ENCODE measurements at regions of chr14 and their contacts with region 1.

Region 1: DNA sequence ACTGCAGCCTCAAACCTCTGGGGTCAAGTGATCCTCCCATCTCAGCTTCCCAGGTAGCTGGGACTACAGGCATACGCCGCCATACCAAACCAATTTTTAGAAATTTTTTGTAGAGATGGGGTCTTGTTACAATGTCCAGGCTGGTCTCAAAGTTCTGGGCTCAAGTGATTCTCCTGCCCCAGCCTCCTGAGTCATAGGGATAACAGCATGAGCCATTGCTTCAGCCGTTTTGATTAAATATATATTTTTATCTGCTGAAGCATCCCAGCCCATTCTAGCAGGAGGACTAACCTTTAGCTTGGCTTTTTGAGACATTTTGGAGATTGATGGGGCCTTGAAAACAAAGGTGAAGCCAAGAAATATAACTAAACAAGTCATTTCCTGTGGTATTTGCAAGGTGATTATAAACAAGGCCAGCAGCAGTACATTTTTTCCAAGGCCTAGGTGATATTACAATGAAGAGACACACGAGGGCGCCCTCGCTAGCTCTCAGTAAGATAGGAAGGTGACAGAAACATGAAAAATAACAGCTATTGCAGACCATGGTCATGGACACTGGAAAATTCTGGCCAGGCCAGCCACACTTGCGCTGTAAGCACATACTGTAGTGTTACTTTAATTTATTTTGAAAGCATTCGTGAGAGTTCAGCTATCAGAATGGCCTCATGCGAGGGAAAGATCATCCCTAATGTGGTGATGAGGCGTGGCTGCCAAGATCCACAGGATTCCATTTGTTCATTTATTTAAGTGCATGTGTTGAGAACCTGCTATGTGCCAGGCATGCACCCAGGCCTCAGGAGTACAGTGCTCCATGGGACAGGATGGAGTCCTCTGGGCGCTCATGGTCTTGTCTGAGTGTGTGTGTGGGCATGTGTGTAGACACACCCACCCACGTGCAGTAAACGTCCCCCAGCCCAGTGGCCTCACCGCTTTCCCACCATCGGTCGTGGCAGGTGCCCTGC is 63.5 kb downstream of the DGLUCY start:
- DNase-seq: peak; percentile 77
- ATAC-seq: peak; percentile 83
- H3K4me3 ChIP-seq: no peak overlapping the region
- H3K4me3 Mint-ChIP-seq: no peak overlapping the region
- H3K27ac ChIP-seq: peak overlapping the region in 1 of 2 donors; percentile 12
- H3K27ac Mint-ChIP-seq: no peak overlapping the region
- H3K4me1 ChIP-seq: peaks cover 0 to 12% of the 10 kb centered on the region in 2 donors
- H3K4me1 Mint-ChIP-seq: peaks cover 7% of the 10 kb centered on the region
- H3K27me3 ChIP-seq: no peaks in the 10 kb centered on the region
- H3K27me3 Mint-ChIP-seq: no peaks in the 10 kb centered on the region
- CTCF ChIP-seq: peak; percentile 95

Region 2: GRCh38 chr14:90903101-90903500 is 274.3 kb before region 1 on chr14:
- CTCF ChIA-PET with region 1: interaction called, 347 read pairs
- POLR2A ChIA-PET with region 1: interaction called, 3 read pairs
- intact Hi-C with region 1: loop called (anchors 1 kb)
- DNase-seq: peak; percentile 68
- ATAC-seq: peak; percentile 69
- H3K4me3 ChIP-seq: no peak overlapping the region
- H3K4me3 Mint-ChIP-seq: no peak overlapping the region
- H3K27ac ChIP-seq: no peak overlapping the region
- H3K27ac Mint-ChIP-seq: peak overlapping the region; percentile 46
- H3K4me1 ChIP-seq: peaks cover 5 to 8% of the 10 kb centered on the region in 2 donors
- H3K4me1 Mint-ChIP-seq: peaks cover 15% of the 10 kb centered on the region
- H3K27me3 ChIP-seq: no peaks in the 10 kb centered on the region
- H3K27me3 Mint-ChIP-seq: no peaks in the 10 kb centered on the region
- CTCF ChIP-seq: peak; percentile 87

Region 3: DNA sequence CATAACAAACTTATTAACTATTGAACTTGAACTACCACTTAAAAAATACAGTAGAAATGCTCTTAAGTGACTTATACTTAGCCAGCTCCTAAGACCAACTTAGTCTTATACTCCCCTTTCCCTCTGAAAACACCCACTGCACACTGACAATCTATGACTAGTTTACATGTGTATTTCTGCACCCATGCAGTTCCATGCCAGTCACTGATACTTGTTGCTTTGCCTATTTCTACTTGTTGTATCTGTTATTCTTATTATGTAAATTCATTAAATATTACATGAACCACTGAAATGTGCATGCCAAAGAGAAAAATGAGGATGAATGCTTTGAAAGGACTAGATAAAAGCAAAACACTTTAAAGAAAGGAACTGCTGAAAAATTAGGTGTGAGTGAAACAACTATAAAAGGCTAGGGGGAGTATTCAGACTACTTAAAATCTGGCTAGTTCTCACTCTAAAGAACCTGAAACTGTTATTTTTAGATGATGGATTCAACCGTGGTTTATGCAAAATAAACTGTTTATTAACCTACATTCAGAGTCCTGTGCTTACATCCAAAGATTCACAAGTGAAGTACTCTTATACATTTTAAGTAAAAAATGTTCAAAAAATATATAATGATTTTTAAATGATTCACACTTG is 191.6 kb before region 1 on chr14:
- CTCF ChIA-PET with region 1: interaction called, 158 read pairs
- POLR2A ChIA-PET with region 1: no interaction called
- intact Hi-C with region 1: loop called (anchors 1 kb)
- DNase-seq: peak; percentile 45
- ATAC-seq: peak; percentile 31
- H3K4me3 ChIP-seq: no peak overlapping the region
- H3K4me3 Mint-ChIP-seq: no peak overlapping the region
- H3K27ac ChIP-seq: no peak overlapping the region
- H3K27ac Mint-ChIP-seq: no peak overlapping the region
- H3K4me1 ChIP-seq: peaks cover 13% of the 10 kb centered on the region in 2 donors
- H3K4me1 Mint-ChIP-seq: peaks cover 17% of the 10 kb centered on the region
- H3K27me3 ChIP-seq: no peaks in the 10 kb centered on the region
- H3K27me3 Mint-ChIP-seq: no peaks in the 10 kb centered on the region
- CTCF ChIP-seq: peak; percentile 4

Region 4: GRCh38 chr14:91114079-91115065 is 63.0 kb before region 1 on chr14:
- CTCF ChIA-PET with region 1: interaction called, 23 read pairs
- POLR2A ChIA-PET with region 1: no interaction called
- intact Hi-C with region 1: no loop called
- DNase-seq: peak; percentile 85
- ATAC-seq: peak; percentile 80
- H3K4me3 ChIP-seq: peak overlapping the region; percentile 71 to 94 (median 82)
- H3K4me3 Mint-ChIP-seq: peak overlapping the region; percentile 93
- H3K27ac ChIP-seq: peak overlapping the region; percentile 89 to 95
- H3K27ac Mint-ChIP-seq: peak overlapping the region; percentile 98
- H3K4me1 ChIP-seq: peaks cover 35 to 50% of the 10 kb centered on the region in 2 donors
- H3K4me1 Mint-ChIP-seq: peaks cover 68% of the 10 kb centered on the region
- H3K27me3 ChIP-seq: no peaks in the 10 kb centered on the region
- H3K27me3 Mint-ChIP-seq: no peaks in the 10 kb centered on the region
- CTCF ChIP-seq: no peak

Region 5: DNA sequence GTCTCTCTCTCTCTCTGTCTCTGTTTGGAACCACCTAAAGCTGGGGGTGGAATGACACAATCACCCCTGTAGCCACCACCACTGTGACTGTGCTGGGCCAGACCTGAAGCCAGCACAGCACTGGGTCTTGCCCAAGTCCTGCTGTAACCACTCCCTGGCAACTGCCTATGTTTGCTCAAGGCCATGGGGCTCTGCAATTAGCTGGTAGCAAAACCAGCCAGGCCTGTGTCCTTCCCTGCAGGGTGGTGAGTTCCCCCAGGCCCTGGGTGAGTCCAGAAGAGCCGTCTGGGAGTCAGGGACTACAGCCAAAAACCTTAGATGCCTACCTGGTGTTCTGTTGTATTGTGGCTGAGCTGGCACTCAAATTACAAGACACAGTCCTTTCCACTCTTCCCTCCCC is 12.7 kb before region 1 on chr14:
- CTCF ChIA-PET with region 1: interaction called, 11 read pairs
- POLR2A ChIA-PET with region 1: no interaction called
- intact Hi-C with region 1: no loop called
- DNase-seq: no peak
- ATAC-seq: no peak
- H3K4me3 ChIP-seq: no peak overlapping the region
- H3K4me3 Mint-ChIP-seq: no peak overlapping the region
- H3K27ac ChIP-seq: no peak overlapping the region
- H3K27ac Mint-ChIP-seq: no peak overlapping the region
- H3K4me1 ChIP-seq: no peaks in the 10 kb centered on the region
- H3K4me1 Mint-ChIP-seq: no peaks in the 10 kb centered on the region
- H3K27me3 ChIP-seq: no peaks in the 10 kb centered on the region
- H3K27me3 Mint-ChIP-seq: no peaks in the 10 kb centered on the region
- CTCF ChIP-seq: no peak

Region 6: DNA sequence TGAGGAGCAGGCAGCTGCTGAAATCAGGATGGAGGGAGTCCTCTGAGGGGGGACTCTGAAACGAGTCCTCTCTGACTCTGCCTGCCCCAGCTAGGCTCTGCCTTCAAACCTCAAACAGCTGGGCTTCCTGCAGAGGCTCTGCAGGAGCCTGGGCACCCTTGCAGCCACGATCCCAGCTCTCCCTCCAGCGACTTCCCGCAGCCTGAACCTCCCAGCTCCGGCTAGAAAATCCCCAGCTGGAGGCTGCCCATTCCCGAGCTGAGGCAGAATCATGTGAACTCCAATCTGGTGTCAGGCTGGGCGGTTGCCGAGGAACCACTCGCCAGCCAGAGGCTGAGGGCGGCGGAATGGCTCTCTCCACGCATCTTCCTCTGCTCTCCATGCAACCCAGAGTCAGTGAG is 67.1 kb after region 1 on chr14 and contains the start of gene GPR68:
- CTCF ChIA-PET with region 1: interaction called, 42 read pairs
- POLR2A ChIA-PET with region 1: no interaction called
- intact Hi-C with region 1: no loop called
- DNase-seq: no peak
- ATAC-seq: no peak
- H3K4me3 ChIP-seq: peak within 1 kb of the TSS in 2 of 5 experiments; percentile 30 to 37
- H3K4me3 Mint-ChIP-seq: peak within 1 kb of the TSS; percentile 75
- H3K27ac ChIP-seq: peak within 1 kb of the TSS; percentile 57 to 79
- H3K27ac Mint-ChIP-seq: peak within 1 kb of the TSS; percentile 91
- H3K4me1 ChIP-seq: peaks cover 46 to 55% of the 10 kb centered on the region in 2 donors
- H3K4me1 Mint-ChIP-seq: peaks cover 62% of the 10 kb centered on the region
- H3K27me3 ChIP-seq: no peaks in the 10 kb centered on the region
- H3K27me3 Mint-ChIP-seq: no peaks in the 10 kb centered on the region
- CTCF ChIP-seq: no peak
- total RNA-seq, gene GPR68: 0.34 and 0.53 TPM in 2 replicates

Region 7: GRCh38 chr14:91348845-91349465 is 171.6 kb after region 1 on chr14:
- CTCF ChIA-PET with region 1: no interaction called
- POLR2A ChIA-PET with region 1: no interaction called
- intact Hi-C with region 1: no loop called
- DNase-seq: no peak
- ATAC-seq: no peak
- H3K4me3 ChIP-seq: no peak overlapping the region
- H3K4me3 Mint-ChIP-seq: peak overlapping the region; percentile 40
- H3K27ac ChIP-seq: peak overlapping the region; percentile 9 to 82
- H3K27ac Mint-ChIP-seq: peak overlapping the region; percentile 80
- H3K4me1 ChIP-seq: peaks cover 62 to 73% of the 10 kb centered on the region in 2 donors
- H3K4me1 Mint-ChIP-seq: peaks cover 78% of the 10 kb centered on the region
- H3K27me3 ChIP-seq: no peaks in the 10 kb centered on the region
- H3K27me3 Mint-ChIP-seq: no peaks in the 10 kb centered on the region
- CTCF ChIP-seq: no peak

Region 8: DNA sequence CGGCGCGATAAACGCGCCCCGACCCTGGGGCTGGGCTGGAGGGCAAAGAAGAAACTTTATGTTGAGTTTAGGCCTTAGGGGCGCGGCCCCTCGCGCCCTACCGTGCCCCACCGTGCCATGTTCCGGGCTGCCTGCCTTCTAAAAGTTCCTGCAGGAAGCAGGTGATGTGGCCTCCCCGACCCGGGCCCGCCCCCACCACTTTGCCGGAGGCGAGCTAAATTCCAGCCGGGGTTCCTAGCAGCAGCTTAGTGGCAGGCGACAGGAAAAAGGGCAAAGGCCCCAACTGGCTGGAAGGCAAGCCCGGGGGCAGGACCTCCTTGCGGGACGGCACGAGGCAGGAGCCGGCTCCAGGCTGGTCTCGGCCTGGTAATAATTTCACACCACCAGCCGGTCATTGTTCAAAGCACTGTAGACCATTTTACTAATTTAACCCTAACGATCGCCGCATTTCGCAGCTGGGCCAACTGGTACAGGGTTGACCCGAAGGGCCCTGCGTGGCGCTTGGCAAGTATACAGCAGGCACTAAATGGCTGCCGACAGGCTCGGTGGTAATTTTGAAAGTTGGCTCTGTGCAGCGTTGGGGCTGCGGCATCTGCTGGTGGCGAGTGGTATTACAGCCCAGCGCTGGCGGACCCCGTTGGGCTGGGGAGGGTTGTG is 241.2 kb after region 1 on chr14:
- CTCF ChIA-PET with region 1: interaction called, 4 read pairs
- POLR2A ChIA-PET with region 1: no interaction called
- intact Hi-C with region 1: loop called (anchors 1 kb)
- DNase-seq: peak; percentile 88
- ATAC-seq: peak; percentile 34
- H3K4me3 ChIP-seq: peak overlapping the region; percentile 30 to 97 (median 40)
- H3K4me3 Mint-ChIP-seq: peak overlapping the region; percentile 84
- H3K27ac ChIP-seq: peak overlapping the region; percentile 75 to 77
- H3K27ac Mint-ChIP-seq: peak overlapping the region; percentile 90
- H3K4me1 ChIP-seq: peaks cover 38% of the 10 kb centered on the region in 2 donors
- H3K4me1 Mint-ChIP-seq: peaks cover 38% of the 10 kb centered on the region
- H3K27me3 ChIP-seq: no peaks in the 10 kb centered on the region
- H3K27me3 Mint-ChIP-seq: no peaks in the 10 kb centered on the region
- CTCF ChIP-seq: peak; percentile 96